Pancreas (tissue), 10 donors: ENCODE measurements at regions of chr4 and their contacts with region 1.

Region 1: DNA sequence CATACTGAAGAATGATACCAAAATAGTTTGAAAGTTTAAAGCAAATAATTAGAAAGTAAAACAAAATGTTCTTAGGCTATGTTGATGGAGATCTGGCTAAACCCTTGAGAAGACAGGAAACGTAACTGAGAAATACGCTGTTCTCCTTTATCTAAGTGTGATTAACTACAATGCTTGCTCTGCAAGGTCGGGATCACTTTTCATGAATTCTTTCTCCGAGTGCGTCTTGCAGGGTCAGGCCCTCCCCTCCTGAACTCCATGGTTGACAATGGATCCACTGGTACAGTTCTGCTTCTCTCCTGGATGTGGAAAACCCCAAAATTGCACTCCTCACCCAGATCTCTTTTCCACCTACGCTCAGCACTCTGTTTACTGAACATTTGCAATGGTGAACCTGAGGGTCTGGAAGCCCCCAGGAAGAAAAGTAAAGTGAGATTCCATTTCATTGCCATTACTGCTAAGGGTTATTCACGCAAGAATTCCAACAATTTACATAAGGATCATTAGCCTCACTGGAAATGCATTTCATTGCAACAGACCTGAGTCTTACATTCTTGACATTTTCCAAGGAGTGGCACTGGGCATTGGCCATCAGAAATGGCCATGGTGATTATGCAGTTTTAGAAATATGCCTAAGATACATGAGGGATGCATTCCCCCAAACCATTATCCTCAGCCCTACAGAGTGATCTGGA is 24.6 kb upstream of the WWC2 start:
- DNase-seq: no peak
- ATAC-seq: no peak
- H3K4me3 ChIP-seq: no peak overlapping the region
- H3K27ac ChIP-seq: no peak overlapping the region
- H3K4me1 ChIP-seq: no peaks in the 10 kb centered on the region
- H3K27me3 ChIP-seq: no peaks in the 10 kb centered on the region
- CTCF ChIP-seq: no peak

Region 2: DNA sequence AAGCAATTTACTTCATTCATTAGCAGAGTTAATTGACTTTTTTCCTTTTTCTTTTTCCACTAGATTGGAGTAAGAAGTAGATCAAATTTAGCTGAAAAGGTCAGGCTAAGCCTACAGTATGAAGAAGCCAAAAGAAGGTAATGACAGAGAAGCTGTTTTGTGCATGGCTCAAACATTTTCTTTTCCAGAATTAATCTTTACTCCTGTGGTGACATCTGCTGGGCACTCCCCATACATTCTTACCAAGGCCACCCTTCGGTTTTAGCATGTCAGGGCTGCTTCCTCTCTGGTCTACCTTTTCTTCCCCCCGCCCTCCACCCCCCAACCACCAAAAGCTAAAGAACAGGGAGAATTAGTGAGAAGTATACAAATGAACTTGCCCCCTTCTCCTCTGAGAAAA is 175.4 kb after region 1 on chr4:
- intact Hi-C with region 1: loop called (anchors 5 to 10 kb)
- DNase-seq: peak in 1 of 6 donors; percentile 42
- ATAC-seq: peak; percentile 64 to 94 (median 91)
- H3K4me3 ChIP-seq: no peak overlapping the region
- H3K27ac ChIP-seq: no peak overlapping the region
- H3K4me1 ChIP-seq: peaks cover 0 to 10% (median 4%) of the 10 kb centered on the region in 3 donors
- H3K27me3 ChIP-seq: no peaks in the 10 kb centered on the region
- CTCF ChIP-seq: peak in 2 of 4 donors; percentile 14 to 16

Region 3: GRCh38 chr4:183256756-183257385 is 182.4 kb after region 1 on chr4:
- intact Hi-C with region 1: loop called (anchors 5 to 10 kb)
- DNase-seq: peak in 4 of 6 donors; percentile 25 to 72 (median 48)
- ATAC-seq: peak in 3 of 4 donors; percentile 73 to 80 (median 75)
- H3K4me3 ChIP-seq: no peak overlapping the region
- H3K27ac ChIP-seq: no peak overlapping the region
- H3K4me1 ChIP-seq: peaks cover 0 to 8% (median 0%) of the 10 kb centered on the region in 3 donors
- H3K27me3 ChIP-seq: no peaks in the 10 kb centered on the region
- CTCF ChIP-seq: peak; percentile 40 to 83 (median 64)